Sciatic nerve (tissue), 2 donors: ENCODE measurements at regions of chr1 and their contacts with region 1.

Region 1: GRCh38 chr1:162471290-162471853 is 26.2 kb upstream of the UHMK1 start:
- DNase-seq: no peak
- ATAC-seq: no peak

Region 2: GRCh38 chr1:162485236-162485635 is 13.9 kb after region 1 on chr1:
- intact Hi-C with region 1: loop called (anchors 1 kb)
- DNase-seq: no peak
- ATAC-seq: no peak